ENCODE measurements at regions of chr15 and their contacts with region 1.

Region 1: GRCh38 chr15:50744601-50745000 is 20.9 kb downstream of the SPPL2A start:
- DNase-seq: no peak
- ATAC-seq: no peak
- H3K4me3 ChIP-seq: no peak overlapping the region
- H3K4me3 Mint-ChIP-seq: no peak overlapping the region
- H3K27ac ChIP-seq: no peak overlapping the region
- H3K27ac Mint-ChIP-seq: no peak overlapping the region
- H3K4me1 ChIP-seq: no peaks in the 10 kb centered on the region
- H3K4me1 Mint-ChIP-seq: no peaks in the 10 kb centered on the region
- H3K27me3 ChIP-seq: no peaks in the 10 kb centered on the region
- H3K27me3 Mint-ChIP-seq: no peaks in the 10 kb centered on the region

Region 2: GRCh38 chr15:50670115-50670514 is 74.5 kb before region 1 on chr15:
- CTCF ChIA-PET with region 1: interaction called in 1 of 2 experiments, 13 read pairs
- POLR2A ChIA-PET with region 1: interaction called in 1 of 2 experiments, 10 read pairs
- DNase-seq: no peak
- ATAC-seq: no peak
- H3K4me3 ChIP-seq: no peak overlapping the region
- H3K4me3 Mint-ChIP-seq: no peak overlapping the region
- H3K27ac ChIP-seq: no peak overlapping the region
- H3K27ac Mint-ChIP-seq: no peak overlapping the region
- H3K4me1 ChIP-seq: no peaks in the 10 kb centered on the region
- H3K4me1 Mint-ChIP-seq: peaks cover 30 to 37% (median 30%) of the 10 kb centered on the region in 3 donors
- H3K27me3 ChIP-seq: no peaks in the 10 kb centered on the region
- H3K27me3 Mint-ChIP-seq: no peaks in the 10 kb centered on the region

Region 3: DNA sequence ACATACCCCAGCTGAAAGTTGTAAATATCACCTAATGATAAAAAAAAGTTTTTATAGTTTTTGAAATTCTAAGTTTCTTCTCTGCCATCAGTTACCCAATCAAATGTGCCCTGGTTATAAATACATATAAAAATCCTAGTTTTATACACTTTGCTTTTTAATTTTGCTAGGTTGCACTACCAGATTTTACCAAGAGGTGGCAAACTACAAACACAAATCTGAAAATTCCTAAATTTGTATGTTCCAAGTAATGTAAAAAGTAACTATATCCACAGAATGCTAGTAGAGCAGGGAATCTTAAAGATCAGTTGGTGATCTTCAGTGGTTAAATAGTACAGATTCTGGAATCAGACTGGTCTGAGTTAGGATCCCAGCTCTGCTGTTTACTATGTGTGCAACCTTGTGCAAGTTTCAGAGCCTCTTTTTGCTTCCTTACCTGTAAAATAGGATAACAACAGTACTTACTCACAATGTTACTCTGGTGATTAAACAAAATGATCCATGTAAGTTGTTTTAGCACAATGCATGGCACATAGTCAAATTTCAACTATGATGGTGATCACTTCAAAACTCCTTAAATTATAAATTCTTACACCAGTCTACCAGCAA is 69.0 kb before region 1 on chr15:
- CTCF ChIA-PET with region 1: no interaction called
- POLR2A ChIA-PET with region 1: interaction called in 1 of 2 experiments, 10 read pairs
- DNase-seq: peak in 2 of 35 experiments; percentile 6 to 60
- ATAC-seq: no peak
- H3K4me3 ChIP-seq: no peak overlapping the region
- H3K4me3 Mint-ChIP-seq: no peak overlapping the region
- H3K27ac ChIP-seq: no peak overlapping the region
- H3K27ac Mint-ChIP-seq: no peak overlapping the region
- H3K4me1 ChIP-seq: peaks cover 3 to 11% of the 10 kb centered on the region in 2 experiments
- H3K4me1 Mint-ChIP-seq: peaks cover 31 to 38% (median 33%) of the 10 kb centered on the region in 3 donors
- H3K27me3 ChIP-seq: no peaks in the 10 kb centered on the region
- H3K27me3 Mint-ChIP-seq: no peaks in the 10 kb centered on the region

Region 4: DNA sequence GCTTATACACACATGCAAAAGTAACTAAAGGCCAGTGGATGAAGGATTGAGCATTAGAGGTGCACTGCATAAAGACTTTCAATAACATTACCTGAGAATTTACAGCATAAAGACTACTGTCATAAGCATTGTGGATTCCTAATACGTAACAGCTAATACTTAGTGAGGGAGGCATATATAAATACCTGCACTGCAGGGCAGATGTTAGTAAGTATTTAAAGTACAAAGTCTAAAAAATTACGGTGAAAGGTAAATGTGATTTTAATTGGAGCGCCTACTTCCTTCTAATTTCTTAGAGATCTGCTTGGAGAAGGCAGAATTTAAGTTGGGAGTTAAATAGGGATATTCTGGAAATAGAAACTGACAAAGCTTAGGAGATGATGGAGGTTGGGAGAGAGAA is 32.6 kb before region 1 on chr15:
- CTCF ChIA-PET with region 1: no interaction called
- POLR2A ChIA-PET with region 1: no interaction called
- DNase-seq: no peak
- ATAC-seq: no peak
- H3K4me3 ChIP-seq: no peak overlapping the region
- H3K4me3 Mint-ChIP-seq: no peak overlapping the region
- H3K27ac ChIP-seq: no peak overlapping the region
- H3K27ac Mint-ChIP-seq: no peak overlapping the region
- H3K4me1 ChIP-seq: no peaks in the 10 kb centered on the region
- H3K4me1 Mint-ChIP-seq: no peaks in the 10 kb centered on the region
- H3K27me3 ChIP-seq: no peaks in the 10 kb centered on the region
- H3K27me3 Mint-ChIP-seq: no peaks in the 10 kb centered on the region

Measured in T-cell (primary cell).